Adrenal gland (tissue), 19 donors: ENCODE measurements at regions of chr15 and their contacts with region 1.

Region 1: DNA sequence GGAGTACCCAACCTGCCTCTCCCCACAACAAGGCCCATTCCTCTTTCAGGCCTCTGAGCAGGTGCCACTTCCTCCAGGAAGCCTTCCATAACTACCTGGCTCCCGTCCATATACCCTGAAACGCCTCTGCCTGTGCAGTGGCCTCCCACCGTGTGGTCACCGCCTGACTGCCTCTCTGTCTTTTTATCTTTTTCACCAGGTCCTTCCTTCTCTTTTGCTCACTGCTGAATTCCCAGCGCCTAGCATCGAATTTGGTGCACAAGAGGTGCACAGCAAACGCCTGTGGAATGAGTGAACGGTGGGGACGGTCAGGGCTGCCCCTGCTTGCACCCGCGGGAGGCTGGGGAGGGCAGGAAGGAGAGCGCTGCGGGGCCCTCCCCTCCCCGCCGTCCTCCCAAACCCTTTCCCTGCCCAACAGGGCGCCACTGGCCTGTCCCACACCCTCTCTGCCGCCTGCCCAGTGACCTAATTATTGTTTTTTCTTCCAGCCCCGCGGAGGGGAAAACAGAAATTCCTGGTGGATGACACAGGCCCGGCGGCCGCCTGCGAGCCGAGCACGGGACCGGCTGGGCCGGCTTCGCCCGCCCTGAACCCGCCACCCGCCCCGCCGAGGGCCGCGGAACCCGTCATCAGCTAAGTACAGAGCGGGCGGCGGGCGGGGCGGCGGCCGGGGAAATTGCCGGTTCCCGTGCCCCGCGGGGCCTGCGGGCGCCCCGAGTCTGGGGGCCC is 140.1 kb downstream of the SMAD6 start:
- DNase-seq: peak; percentile 84 to 92 (median 91)
- H3K4me3 ChIP-seq: peak overlapping the region in 2 of 4 donors; percentile 20 to 80
- H3K27ac ChIP-seq: peak overlapping the region; percentile 66 to 100 (median 84)
- H3K4me1 ChIP-seq: peaks cover 5 to 8% of the 10 kb centered on the region in 2 donors
- H3K27me3 ChIP-seq: no peaks in the 10 kb centered on the region
- CTCF ChIP-seq: no peak
- POLR2A ChIP-seq: peak in 1 of 2 donors; percentile 79

Region 2: GRCh38 chr15:66700802-66701421 is 141.2 kb before region 1 on chr15:
- intact Hi-C with region 1: loop called in 1 of 2 experiments (anchors 10 kb)
- DNase-seq: peak; percentile 96 to 98 (median 97)
- H3K4me3 ChIP-seq: peak overlapping the region in 3 of 4 donors; percentile 19 to 67 (median 58)
- H3K27ac ChIP-seq: peak overlapping the region in 4 of 5 donors; percentile 42 to 90 (median 61)
- H3K4me1 ChIP-seq: peaks cover 4 to 19% of the 10 kb centered on the region in 2 donors
- H3K27me3 ChIP-seq: no peaks in the 10 kb centered on the region
- CTCF ChIP-seq: no peak
- POLR2A ChIP-seq: peak in 1 of 2 donors; percentile 23

Region 3: DNA sequence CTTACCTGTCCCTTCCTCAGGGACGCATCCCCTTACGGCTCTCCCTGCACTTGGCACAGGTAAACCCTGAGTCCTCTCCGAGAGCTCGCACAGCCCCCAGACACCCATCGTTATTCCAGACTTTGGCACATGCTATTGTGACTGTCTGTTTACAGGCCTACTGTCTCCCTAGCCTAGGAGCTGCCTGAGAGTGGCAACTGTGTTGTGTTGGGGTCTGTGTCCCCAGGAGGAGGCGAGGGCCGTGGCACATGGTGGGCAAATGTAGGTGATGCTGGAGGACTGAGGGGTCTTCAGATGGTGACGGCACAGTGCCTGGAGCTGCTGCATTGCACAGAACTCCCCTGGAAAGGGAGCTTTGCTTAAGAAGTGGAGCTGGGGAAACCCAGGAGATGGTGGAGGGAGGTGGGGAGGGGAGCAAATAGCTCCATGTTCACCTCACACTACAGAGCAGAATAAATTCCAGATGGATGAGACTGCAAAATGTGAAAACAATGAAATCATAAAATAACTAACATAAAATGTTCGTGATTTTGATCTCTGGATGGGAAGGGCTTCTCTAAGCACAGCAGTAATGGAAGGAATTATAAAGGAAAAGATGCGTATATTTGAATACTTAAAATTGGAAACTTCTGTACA is 43.6 kb before region 1 on chr15:
- intact Hi-C with region 1: loop called in 1 of 2 experiments (anchors 5 kb)
- DNase-seq: no peak
- H3K4me3 ChIP-seq: no peak overlapping the region
- H3K27ac ChIP-seq: no peak overlapping the region
- H3K4me1 ChIP-seq: peaks cover 10 to 13% of the 10 kb centered on the region in 2 donors
- H3K27me3 ChIP-seq: no peaks in the 10 kb centered on the region
- CTCF ChIP-seq: no peak
- POLR2A ChIP-seq: no peak

Region 4: DNA sequence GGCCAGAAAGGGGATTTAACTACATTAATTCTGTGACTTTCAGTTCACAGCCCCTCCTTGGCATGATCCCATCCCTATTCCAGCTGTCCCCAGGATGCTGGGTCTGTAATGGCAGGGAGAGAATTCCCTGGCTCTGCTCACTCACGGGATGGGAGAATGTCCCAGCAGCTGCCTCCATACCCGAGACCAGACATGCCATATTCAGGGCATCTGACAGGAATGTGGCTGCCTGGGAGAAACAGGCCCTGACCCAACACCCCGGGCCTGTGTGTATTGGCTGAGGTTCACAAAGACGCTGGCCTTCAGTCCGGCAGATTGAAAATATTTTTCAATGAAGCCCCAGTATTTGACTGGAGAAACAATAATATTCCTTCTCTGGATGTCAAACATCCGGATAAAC is 139.7 kb after region 1 on chr15:
- intact Hi-C with region 1: no loop called
- DNase-seq: no peak
- H3K4me3 ChIP-seq: no peak overlapping the region
- H3K27ac ChIP-seq: no peak overlapping the region
- H3K4me1 ChIP-seq: no peaks in the 10 kb centered on the region
- H3K27me3 ChIP-seq: no peaks in the 10 kb centered on the region
- CTCF ChIP-seq: no peak
- POLR2A ChIP-seq: no peak